IMR-90 (cell line): ENCODE measurements at regions of chr11 and their contacts with region 1.

Region 1: GRCh38 chr11:92886243-92886905 is 83.1 kb upstream of the MTNR1B start:
- DNase-seq: peak; percentile 61
- ATAC-seq: peak; percentile 88
- H3K4me3 ChIP-seq: no peak overlapping the region
- H3K27ac ChIP-seq: no peak overlapping the region
- H3K4me1 ChIP-seq: no peaks in the 10 kb centered on the region
- H3K27me3 ChIP-seq: no peaks in the 10 kb centered on the region; the same call in 1 of the 2 replicates
- CTCF ChIP-seq: peak; percentile 80
- POLR2A ChIP-seq: no peak
- RAD21 ChIP-seq: peak; percentile 91

Region 2: GRCh38 chr11:92070026-92070889 is 816.1 kb before region 1 on chr11:
- CTCF ChIA-PET with region 1: no interaction called
- POLR2A ChIA-PET with region 1: no interaction called
- dilution Hi-C with region 1: no loop called
- in situ Hi-C with region 1: no loop called
- intact Hi-C with region 1: loop called (anchors 5 kb)
- DNase-seq: no peak
- ATAC-seq: no peak
- H3K4me3 ChIP-seq: no peak overlapping the region
- H3K27ac ChIP-seq: no peak overlapping the region
- H3K4me1 ChIP-seq: no peaks in the 10 kb centered on the region
- H3K27me3 ChIP-seq: no peaks in the 10 kb centered on the region
- CTCF ChIP-seq: 0 out of 2 replicates have a peak, but pooled peaks have one; percentile 21
- POLR2A ChIP-seq: no peak
- RAD21 ChIP-seq: 0 out of 2 replicates have a peak, but pooled peaks have one; percentile 27

Region 3: DNA sequence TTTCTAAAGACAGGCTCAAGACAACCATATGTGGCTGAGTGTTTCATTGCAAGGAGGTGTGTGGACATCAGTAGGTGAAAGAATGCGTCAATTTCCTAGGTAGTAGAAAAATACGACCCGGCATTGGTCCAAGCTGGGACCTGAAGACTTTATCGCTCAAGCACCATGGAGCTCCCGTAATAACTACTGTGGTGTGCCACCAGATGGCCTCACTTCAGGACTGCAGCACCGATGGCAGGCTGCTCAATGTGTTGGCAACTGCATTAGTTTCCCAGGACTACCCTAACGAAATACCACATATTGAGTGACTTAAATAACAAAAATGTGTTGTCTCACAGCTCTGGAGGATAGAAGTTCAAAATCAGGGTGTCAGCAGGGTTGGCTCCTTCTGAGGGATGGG is 734.1 kb before region 1 on chr11:
- CTCF ChIA-PET with region 1: no interaction called
- POLR2A ChIA-PET with region 1: no interaction called
- dilution Hi-C with region 1: no loop called
- in situ Hi-C with region 1: no loop called
- intact Hi-C with region 1: loop called (anchors 10 kb)
- DNase-seq: no peak
- ATAC-seq: no peak
- H3K4me3 ChIP-seq: no peak overlapping the region
- H3K27ac ChIP-seq: no peak overlapping the region
- H3K4me1 ChIP-seq: no peaks in the 10 kb centered on the region
- H3K27me3 ChIP-seq: no peaks in the 10 kb centered on the region
- CTCF ChIP-seq: no peak
- POLR2A ChIP-seq: no peak
- RAD21 ChIP-seq: no peak

Region 4: DNA sequence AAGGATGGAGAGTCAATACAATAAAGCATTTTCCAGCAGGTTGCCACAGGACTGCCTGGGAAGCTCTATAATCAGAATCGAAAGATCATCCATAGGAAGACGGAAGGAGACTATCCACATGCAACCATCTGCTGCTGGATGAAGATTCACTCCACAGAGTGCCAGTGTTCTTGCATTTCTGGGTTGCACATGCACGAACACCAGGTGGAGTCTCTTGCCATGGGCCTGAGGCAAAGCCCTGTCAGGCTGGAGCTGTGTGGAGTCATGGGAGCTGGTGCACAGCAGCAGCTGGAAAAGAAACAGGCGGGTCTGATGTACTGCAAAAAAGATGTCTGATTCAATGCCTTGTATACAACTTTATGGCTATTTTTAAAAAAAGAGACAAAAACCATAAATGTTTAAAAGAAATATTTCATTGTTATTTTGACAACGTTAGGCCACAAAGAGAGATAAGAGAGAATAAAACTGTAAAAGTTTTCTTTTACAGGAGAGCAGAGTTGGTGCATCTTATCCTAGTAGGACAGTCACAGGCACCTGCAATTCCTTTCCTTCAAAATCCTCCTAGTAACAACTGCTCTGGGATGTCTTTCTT is 674.7 kb before region 1 on chr11:
- CTCF ChIA-PET with region 1: no interaction called
- POLR2A ChIA-PET with region 1: no interaction called
- dilution Hi-C with region 1: no loop called
- in situ Hi-C with region 1: loop called (anchors 10 kb)
- intact Hi-C with region 1: loop called (anchors 2 kb)
- DNase-seq: peak; percentile 33
- ATAC-seq: peak; percentile 83
- H3K4me3 ChIP-seq: no peak overlapping the region
- H3K27ac ChIP-seq: no peak overlapping the region
- H3K4me1 ChIP-seq: no peaks in the 10 kb centered on the region
- H3K27me3 ChIP-seq: no peaks in the 10 kb centered on the region
- CTCF ChIP-seq: peak; percentile 39
- POLR2A ChIP-seq: no peak
- RAD21 ChIP-seq: peak; percentile 60

Region 5: GRCh38 chr11:92552942-92553341 is 333.4 kb before region 1 on chr11:
- CTCF ChIA-PET with region 1: no interaction called
- POLR2A ChIA-PET with region 1: no interaction called
- dilution Hi-C with region 1: no loop called
- in situ Hi-C with region 1: no loop called
- intact Hi-C with region 1: loop called (anchors 5 kb)
- DNase-seq: peak; percentile 4
- ATAC-seq: no peak
- H3K4me3 ChIP-seq: no peak overlapping the region
- H3K27ac ChIP-seq: no peak overlapping the region
- H3K4me1 ChIP-seq: no peaks in the 10 kb centered on the region
- H3K27me3 ChIP-seq: no peaks in the 10 kb centered on the region
- CTCF ChIP-seq: peak; percentile 46
- POLR2A ChIP-seq: no peak
- RAD21 ChIP-seq: peak; percentile 55